ENCODE measurements at regions of chr11 and their contacts with region 1.

Region 1: GRCh38 chr11:62394825-62395538 is 23.9 kb upstream of the SCGB1A1 start:
- DNase-seq: peak; percentile 78 to 88 (median 83)
- ATAC-seq: peak; percentile 71 to 84 (median 82)
- H3K4me3 ChIP-seq: peak overlapping the region in 11 of 12 donors; percentile 21 to 60 (median 45)
- H3K27ac ChIP-seq: peak overlapping the region in 11 of 12 donors; percentile 10 to 82 (median 67)
- H3K4me1 ChIP-seq: peaks cover 6 to 50% (median 36%) of the 10 kb centered on the region in 12 donors
- H3K27me3 ChIP-seq: no peaks in the 10 kb centered on the region
- CTCF ChIP-seq: peak; percentile 59 to 85 (median 74)
- POLR2A ChIP-seq: no peak

Region 2: DNA sequence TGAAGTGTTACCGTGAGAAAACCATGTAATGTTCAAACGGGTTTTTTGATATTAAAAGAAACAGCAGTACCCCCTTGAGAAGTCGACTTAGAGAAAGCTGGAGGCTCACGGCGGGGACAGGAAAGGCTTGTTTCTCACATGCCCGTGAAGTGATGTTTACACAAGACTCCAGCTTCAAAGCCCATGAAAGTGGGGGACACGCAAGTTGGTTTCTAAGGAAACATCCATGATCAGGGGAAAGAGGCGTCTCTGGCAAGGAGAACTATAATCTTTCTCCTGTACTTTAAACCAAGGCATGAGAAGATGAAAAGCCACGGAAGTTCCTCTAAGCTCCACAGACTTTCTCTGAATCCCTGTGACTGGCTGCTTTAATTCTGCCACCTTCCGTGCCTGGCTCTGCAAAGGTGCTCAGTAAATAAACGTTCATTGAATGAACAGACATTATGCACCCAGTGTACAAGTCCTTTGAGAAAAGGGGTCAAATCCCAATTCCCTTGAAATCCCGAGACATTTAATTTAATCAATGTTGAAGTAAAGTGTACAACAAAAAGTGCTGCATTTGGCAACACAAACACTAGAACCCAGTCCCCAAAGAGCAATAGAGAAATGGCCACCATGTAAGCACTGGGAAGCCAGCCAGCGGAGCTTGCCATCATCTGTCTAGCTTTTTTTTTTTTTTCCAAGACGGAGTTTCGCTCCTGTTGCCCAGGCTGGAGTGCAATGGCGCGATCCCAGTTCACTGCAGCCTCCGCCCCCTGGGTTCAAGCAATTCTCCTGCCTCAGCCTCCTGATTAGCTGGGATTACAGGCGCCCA is 93.0 kb after region 1 on chr11:
- intact Hi-C with region 1: loop called in 1 of 10 experiments (anchors 5 kb)
- DNase-seq: no peak
- ATAC-seq: no peak
- H3K4me3 ChIP-seq: no peak overlapping the region
- H3K27ac ChIP-seq: peak overlapping the region in 1 of 12 donors; percentile 38
- H3K4me1 ChIP-seq: no peaks in the 10 kb centered on the region
- H3K27me3 ChIP-seq: no peaks in the 10 kb centered on the region
- CTCF ChIP-seq: no peak
- POLR2A ChIP-seq: no peak

Region 3: DNA sequence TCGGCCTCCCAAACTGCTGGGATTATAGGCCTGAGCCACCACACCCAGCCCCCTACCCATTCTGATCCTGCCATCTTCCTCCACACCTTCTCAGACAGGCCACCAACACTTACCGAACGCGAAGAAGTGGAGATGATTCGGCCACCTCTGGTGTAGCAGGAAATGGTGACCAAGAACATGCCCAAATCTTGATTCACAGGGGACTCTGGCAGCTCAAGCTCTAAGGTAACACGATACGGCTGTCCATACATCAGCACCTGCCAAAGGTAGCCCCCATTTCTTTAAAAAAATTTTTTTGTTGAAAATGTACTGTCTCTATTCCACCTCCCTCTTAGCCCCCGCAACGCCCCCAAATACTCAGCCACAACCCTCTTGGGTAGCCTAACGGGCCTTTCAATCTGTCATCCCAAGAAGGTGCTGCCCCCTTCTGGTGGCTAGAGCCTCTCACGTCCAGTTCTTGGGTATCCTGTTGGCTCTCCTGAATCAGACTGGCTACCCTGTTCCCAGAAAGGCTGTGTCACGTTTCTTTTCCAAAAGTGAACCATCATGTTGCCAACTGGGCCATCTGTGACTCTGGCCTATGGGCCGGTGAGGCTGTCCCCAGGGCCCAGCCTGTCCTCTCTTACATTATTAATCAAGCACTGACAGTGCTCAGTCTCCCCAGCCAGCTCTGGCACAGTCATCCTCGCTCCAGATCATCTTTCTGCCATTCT is 299.6 kb after region 1 on chr11:
- intact Hi-C with region 1: loop called (anchors 5 to 10 kb)
- DNase-seq: peak; percentile 80 to 90 (median 83)
- ATAC-seq: peak; percentile 57 to 85 (median 78)
- H3K4me3 ChIP-seq: no peak overlapping the region
- H3K27ac ChIP-seq: peak overlapping the region in 5 of 12 donors; percentile 13 to 42 (median 34)
- H3K4me1 ChIP-seq: peaks cover 0 to 21% (median 14%) of the 10 kb centered on the region in 12 donors
- H3K27me3 ChIP-seq: no peaks in the 10 kb centered on the region
- CTCF ChIP-seq: peak; percentile 69 to 90 (median 81)
- POLR2A ChIP-seq: no peak

Region 4: GRCh38 chr11:62855571-62856332 is 460.8 kb after region 1 on chr11:
- intact Hi-C with region 1: loop called in 6 of 10 experiments (anchors 5 to 10 kb)
- DNase-seq: peak; percentile 96 to 97 (median 96)
- ATAC-seq: peak; percentile 98 to 99 (median 98)
- H3K4me3 ChIP-seq: peak overlapping the region; percentile 61 to 94 (median 76)
- H3K27ac ChIP-seq: peak overlapping the region; percentile 38 to 88 (median 80)
- H3K4me1 ChIP-seq: peaks cover 5 to 54% (median 25%) of the 10 kb centered on the region in 12 donors
- H3K27me3 ChIP-seq: no peaks in the 10 kb centered on the region
- CTCF ChIP-seq: peak in 1 of 12 donors; percentile 18
- POLR2A ChIP-seq: peak; percentile 79 to 97

Region 5: GRCh38 chr11:62860835-62861563 is 466.0 kb after region 1 on chr11:
- intact Hi-C with region 1: loop called in 6 of 10 experiments (anchors 5 to 10 kb)
- DNase-seq: no peak
- ATAC-seq: no peak
- H3K4me3 ChIP-seq: no peak overlapping the region
- H3K27ac ChIP-seq: peak overlapping the region in 1 of 12 donors; percentile 3
- H3K4me1 ChIP-seq: peaks cover 0 to 29% (median 5%) of the 10 kb centered on the region in 12 donors
- H3K27me3 ChIP-seq: no peaks in the 10 kb centered on the region
- CTCF ChIP-seq: no peak
- POLR2A ChIP-seq: no peak